Activated CD8-positive, alpha-beta T cell treated with anti-CD3 and anti-CD28 coated beads for 36 hours (primary cell): ENCODE measurements at regions of chr6 and their contacts with region 1.

Region 1: DNA sequence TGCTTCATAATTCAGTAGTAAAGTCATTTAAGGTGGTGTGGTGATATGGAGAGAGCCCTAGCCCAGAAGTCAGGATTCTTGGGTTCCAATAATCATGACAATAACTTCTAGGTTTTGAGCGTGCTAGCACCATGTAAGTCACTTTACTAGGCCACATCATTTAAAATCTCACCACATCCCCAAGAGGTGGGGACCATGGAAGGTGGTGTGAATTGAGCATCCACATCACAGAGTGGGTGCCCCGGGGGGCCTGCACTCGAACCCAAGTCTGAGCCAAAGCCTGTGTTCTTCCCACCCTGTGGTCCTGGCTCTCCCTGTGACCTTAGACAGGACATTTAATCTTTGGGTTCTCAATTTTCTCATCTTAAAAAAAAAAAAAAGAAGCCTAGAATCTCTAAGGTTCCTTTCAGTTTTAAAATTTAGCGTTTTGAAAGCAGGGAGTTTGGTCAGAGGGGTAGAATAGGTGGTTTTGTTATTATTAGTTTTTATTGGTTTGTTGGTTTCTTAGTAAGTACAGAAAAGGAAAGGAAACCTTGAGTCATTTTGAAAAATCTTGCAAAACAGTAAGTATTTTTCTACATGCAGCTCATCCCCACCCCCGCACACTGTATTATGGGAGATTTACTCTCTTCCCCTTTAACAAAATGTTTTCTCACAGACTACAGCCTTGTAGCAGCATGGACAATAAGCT is 26.4 kb downstream of the ARMC2 start:
- DNase-seq: peak; percentile 87
- ATAC-seq: peak; percentile 79
- H3K4me3 Mint-ChIP-seq: peak overlapping the region; percentile 54
- H3K27ac Mint-ChIP-seq: peak overlapping the region; percentile 93
- H3K4me1 Mint-ChIP-seq: peaks cover 48% of the 10 kb centered on the region
- H3K27me3 Mint-ChIP-seq: no peaks in the 10 kb centered on the region
- CTCF ChIP-seq: no peak

Region 2: GRCh38 chr6:108896111-108896661 is 21.6 kb after region 1 on chr6:
- CTCF ChIA-PET with region 1: interaction called, 22 read pairs
- POLR2A ChIA-PET with region 1: no interaction called
- intact Hi-C with region 1: no loop called
- DNase-seq: no peak
- ATAC-seq: peak; percentile 63
- H3K4me3 Mint-ChIP-seq: no peak overlapping the region
- H3K27ac Mint-ChIP-seq: peak overlapping the region; percentile 84
- H3K4me1 Mint-ChIP-seq: peaks cover 25% of the 10 kb centered on the region
- H3K27me3 Mint-ChIP-seq: no peaks in the 10 kb centered on the region
- CTCF ChIP-seq: no peak

Region 3: DNA sequence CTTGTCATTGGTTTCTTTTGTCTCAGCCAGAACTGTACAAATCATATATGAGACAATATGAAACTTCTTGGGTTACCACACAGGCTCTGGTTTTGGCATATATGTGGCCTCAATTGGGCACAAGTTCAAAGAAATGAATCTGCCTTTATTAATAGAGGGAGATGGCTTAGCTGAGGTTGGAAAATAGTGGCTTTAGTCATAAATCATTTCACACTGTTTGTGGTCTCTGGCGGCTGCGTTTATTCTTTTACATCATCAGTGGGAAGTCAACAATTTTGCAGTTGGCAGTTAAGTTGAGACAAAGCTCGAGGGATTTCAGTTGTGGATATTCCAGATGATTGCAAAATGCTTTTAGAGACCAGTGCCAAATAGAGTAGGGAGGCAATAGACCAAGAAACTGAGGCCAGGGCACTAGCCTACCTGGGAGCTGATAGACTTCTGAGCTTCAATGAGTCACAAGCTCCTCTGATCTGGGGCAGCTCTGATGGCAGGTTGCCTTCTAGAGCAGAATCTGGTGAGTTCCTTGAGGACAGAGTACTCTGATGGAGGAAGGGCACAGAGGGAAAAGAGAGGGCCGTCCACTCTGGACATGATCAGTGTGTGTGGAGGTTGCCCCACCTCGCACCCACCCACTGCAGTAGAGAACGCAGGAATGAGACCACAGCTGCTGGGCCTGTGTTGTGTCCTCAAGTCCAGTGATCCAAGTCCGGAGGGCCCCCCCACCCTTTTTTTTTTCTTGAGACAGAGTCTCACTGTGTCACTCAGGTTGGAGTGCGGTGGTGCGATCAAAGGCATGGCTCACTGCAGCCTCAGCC is 47.1 kb after region 1 on chr6:
- CTCF ChIA-PET with region 1: interaction called, 3 read pairs
- POLR2A ChIA-PET with region 1: no interaction called
- intact Hi-C with region 1: loop called (anchors 1 kb)
- DNase-seq: peak; percentile 73
- ATAC-seq: peak; percentile 80
- H3K4me3 Mint-ChIP-seq: peak overlapping the region; percentile 1
- H3K27ac Mint-ChIP-seq: peak overlapping the region; percentile 47
- H3K4me1 Mint-ChIP-seq: peaks cover 34% of the 10 kb centered on the region
- H3K27me3 Mint-ChIP-seq: no peaks in the 10 kb centered on the region
- CTCF ChIP-seq: no peak